CD4-positive, alpha-beta memory T cell (primary cell): ENCODE measurements at regions of chr2 and their contacts with region 1.

Region 1: DNA sequence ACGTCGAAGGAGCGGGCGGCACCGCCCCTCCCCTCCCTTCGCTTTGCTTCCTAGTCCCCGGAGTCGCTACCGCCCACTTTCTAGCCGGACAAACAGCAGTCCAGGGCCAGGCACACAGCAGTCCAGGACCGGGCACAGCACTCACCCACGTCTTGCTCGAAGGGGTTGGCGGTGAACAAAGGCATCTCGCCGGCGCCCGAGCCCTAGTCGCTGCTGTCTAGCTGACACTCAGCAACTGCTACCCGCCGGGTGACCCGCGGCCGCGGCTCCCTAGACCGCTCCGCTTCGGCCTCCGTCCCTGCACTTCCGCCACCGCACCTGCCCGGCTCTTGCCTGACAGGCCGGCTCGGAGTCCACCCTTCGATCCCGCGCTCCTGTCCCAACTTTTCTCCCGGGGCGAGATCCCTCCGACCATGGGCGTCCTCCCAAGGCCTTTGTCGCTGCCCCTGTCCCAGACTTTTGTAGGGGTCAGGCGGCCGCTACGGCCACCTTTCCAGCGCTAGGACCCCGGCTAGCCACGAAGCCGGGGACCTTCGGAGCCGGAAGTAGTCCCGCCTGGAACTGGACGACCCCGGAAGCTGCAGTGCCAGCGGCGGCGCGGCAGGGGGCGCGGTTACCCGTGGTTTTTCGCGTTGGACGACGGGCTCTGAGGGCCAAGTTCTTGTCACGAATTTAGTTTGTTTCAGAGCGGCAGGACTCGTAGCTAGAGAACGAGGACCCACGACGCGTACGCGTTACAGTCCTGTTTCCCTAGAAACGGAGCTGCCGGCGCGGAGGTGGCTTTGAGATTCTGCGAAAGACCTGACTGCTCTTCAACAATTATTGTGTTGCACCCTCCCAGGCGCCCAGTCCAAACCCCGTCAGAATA is at the start of gene STAM2:
- DNase-seq: peak; percentile 85 to 93 (median 91)
- H3K4me3 ChIP-seq: peak within 1 kb of the TSS; percentile 74 to 99
- H3K4me3 Mint-ChIP-seq: peak within 1 kb of the TSS; percentile 95 to 99 (median 98)
- H3K27ac ChIP-seq: peak within 1 kb of the TSS; percentile 91
- H3K27ac Mint-ChIP-seq: peak within 1 kb of the TSS; percentile 98 to 100 (median 99)
- H3K4me1 ChIP-seq: peaks cover 36% of the 10 kb centered on the region
- H3K4me1 Mint-ChIP-seq: peaks cover 25 to 49% (median 32%) of the 10 kb centered on the region in 4 donors
- H3K27me3 ChIP-seq: no peaks in the 10 kb centered on the region
- H3K27me3 Mint-ChIP-seq: peaks cover 0 to 2% of the 10 kb centered on the region in 2 donors
- total RNA-seq, gene STAM2: 20.9 to 25.3 TPM

Region 2: GRCh38 chr2:151828143-151828889 is 347.4 kb before region 1 on chr2 and contains the start of gene ARL5A:
- CTCF ChIA-PET with region 1: no interaction called
- POLR2A ChIA-PET with region 1: interaction called, 4 read pairs
- intact Hi-C with region 1: loop called (anchors 1 kb)
- DNase-seq: peak; percentile 93 to 97 (median 95)
- H3K4me3 ChIP-seq: peak within 1 kb of the TSS; percentile 62 to 88
- H3K4me3 Mint-ChIP-seq: peak within 1 kb of the TSS; percentile 87 to 97 (median 94)
- H3K27ac ChIP-seq: peak within 1 kb of the TSS; percentile 82
- H3K27ac Mint-ChIP-seq: peak within 1 kb of the TSS; percentile 84 to 97 (median 93)
- H3K4me1 ChIP-seq: peaks cover 44% of the 10 kb centered on the region
- H3K4me1 Mint-ChIP-seq: peaks cover 32 to 57% (median 41%) of the 10 kb centered on the region in 4 donors
- H3K27me3 ChIP-seq: no peaks in the 10 kb centered on the region
- H3K27me3 Mint-ChIP-seq: no peaks in the 10 kb centered on the region
- total RNA-seq, gene ARL5A: 40.9 to 41.6 TPM

Region 3: GRCh38 chr2:152186262-152186661 is 10.6 kb after region 1 on chr2:
- CTCF ChIA-PET with region 1: interaction called, 14 read pairs
- POLR2A ChIA-PET with region 1: interaction called, 3 read pairs
- intact Hi-C with region 1: no loop called
- DNase-seq: no peak
- H3K4me3 ChIP-seq: no peak overlapping the region
- H3K4me3 Mint-ChIP-seq: no peak overlapping the region
- H3K27ac ChIP-seq: no peak overlapping the region
- H3K27ac Mint-ChIP-seq: no peak overlapping the region
- H3K4me1 ChIP-seq: no peaks in the 10 kb centered on the region
- H3K4me1 Mint-ChIP-seq: peaks cover 0 to 8% (median 3%) of the 10 kb centered on the region in 4 donors
- H3K27me3 ChIP-seq: no peaks in the 10 kb centered on the region
- H3K27me3 Mint-ChIP-seq: peaks cover 19% of the 10 kb centered on the region in 2 donors

Region 4: DNA sequence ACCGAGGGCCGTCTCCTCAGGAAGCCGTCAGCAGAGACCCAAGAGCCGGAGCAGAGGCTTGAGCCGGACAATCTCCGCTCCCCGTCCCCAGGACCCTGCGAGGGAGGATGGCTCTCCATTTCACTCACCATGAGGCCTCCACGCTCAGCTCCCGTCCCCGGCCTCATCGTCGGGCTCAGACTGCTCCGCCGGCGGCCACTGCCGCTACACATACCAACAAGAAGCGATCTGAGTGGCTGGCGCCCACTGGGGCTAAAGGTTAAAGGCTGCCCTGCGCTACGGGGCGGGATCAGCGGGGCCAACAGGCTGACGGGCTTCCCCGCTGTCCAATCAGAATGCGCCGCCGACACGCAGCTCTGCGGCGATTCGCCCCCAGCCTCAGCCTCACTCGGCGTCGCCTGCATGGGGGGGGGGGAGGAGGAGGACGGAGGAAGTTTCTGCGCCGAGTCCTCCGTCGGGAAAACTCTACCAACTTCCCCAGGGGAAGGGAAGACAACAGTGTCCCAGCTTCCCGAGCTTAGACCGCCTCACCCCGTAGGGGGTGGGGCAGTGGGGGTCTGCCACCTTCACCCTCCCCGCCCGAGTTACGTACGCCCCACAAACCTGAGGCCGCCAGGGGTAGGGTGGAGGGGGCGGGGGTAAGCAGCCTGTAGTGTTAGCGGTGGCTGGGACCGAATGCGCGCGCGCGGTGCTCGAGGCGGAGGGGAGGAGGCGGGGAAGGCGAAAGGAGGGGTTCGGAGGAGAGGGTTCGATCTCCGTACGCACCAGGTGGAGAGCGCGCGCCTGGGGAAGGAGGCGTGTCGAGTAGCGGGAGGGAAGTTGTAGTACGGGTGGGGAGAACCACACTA is 541.8 kb after region 1 on chr2 and contains the start of gene PRPF40A:
- CTCF ChIA-PET with region 1: interaction called, 6 read pairs
- POLR2A ChIA-PET with region 1: interaction called, 25 read pairs
- intact Hi-C with region 1: loop called (anchors 1 kb)
- DNase-seq: peak; percentile 98 to 99 (median 99)
- H3K4me3 ChIP-seq: peak within 1 kb of the TSS; percentile 89 to 94
- H3K4me3 Mint-ChIP-seq: peak within 1 kb of the TSS; percentile 97 to 100 (median 99)
- H3K27ac ChIP-seq: peak within 1 kb of the TSS; percentile 96
- H3K27ac Mint-ChIP-seq: peak within 1 kb of the TSS; percentile 95 to 100 (median 98)
- H3K4me1 ChIP-seq: peaks cover 65% of the 10 kb centered on the region
- H3K4me1 Mint-ChIP-seq: peaks cover 39 to 85% (median 58%) of the 10 kb centered on the region in 4 donors
- H3K27me3 ChIP-seq: no peaks in the 10 kb centered on the region
- H3K27me3 Mint-ChIP-seq: peaks cover 0 to 2% of the 10 kb centered on the region in 2 donors
- total RNA-seq, gene PRPF40A: 95.0 to 105 TPM

Region 5: GRCh38 chr2:153478334-153479261 is 1302.9 kb after region 1 on chr2 and contains the start of gene RPRM:
- CTCF ChIA-PET with region 1: no interaction called
- POLR2A ChIA-PET with region 1: interaction called, 4 read pairs
- intact Hi-C with region 1: loop called (anchors 1 kb)
- DNase-seq: peak; percentile 42 to 59 (median 53)
- H3K4me3 ChIP-seq: peak within 1 kb of the TSS in 1 of 2 donors; percentile 42
- H3K4me3 Mint-ChIP-seq: peak within 1 kb of the TSS; percentile 65 to 88 (median 78)
- H3K27ac ChIP-seq: no peak within 1 kb of the TSS
- H3K27ac Mint-ChIP-seq: peak within 1 kb of the TSS in 1 of 7 donors; percentile 75
- H3K4me1 ChIP-seq: peaks cover 23% of the 10 kb centered on the region
- H3K4me1 Mint-ChIP-seq: peaks cover 10 to 31% (median 17%) of the 10 kb centered on the region in 4 donors
- H3K27me3 ChIP-seq: peaks cover 24% of the 10 kb centered on the region
- H3K27me3 Mint-ChIP-seq: peaks cover 38 to 43% of the 10 kb centered on the region in 2 donors
- total RNA-seq, gene RPRM: not detected